AG04449 (cell line): ENCODE measurements at regions of chr11 and their contacts with region 1.

Region 1: GRCh38 chr11:2420502-2421225 is 20.1 kb downstream of the TSSC4 start:
- DNase-seq: no peak
- H3K4me3 ChIP-seq: no peak overlapping the region
- CTCF ChIP-seq: peak; percentile 94

Region 2: DNA sequence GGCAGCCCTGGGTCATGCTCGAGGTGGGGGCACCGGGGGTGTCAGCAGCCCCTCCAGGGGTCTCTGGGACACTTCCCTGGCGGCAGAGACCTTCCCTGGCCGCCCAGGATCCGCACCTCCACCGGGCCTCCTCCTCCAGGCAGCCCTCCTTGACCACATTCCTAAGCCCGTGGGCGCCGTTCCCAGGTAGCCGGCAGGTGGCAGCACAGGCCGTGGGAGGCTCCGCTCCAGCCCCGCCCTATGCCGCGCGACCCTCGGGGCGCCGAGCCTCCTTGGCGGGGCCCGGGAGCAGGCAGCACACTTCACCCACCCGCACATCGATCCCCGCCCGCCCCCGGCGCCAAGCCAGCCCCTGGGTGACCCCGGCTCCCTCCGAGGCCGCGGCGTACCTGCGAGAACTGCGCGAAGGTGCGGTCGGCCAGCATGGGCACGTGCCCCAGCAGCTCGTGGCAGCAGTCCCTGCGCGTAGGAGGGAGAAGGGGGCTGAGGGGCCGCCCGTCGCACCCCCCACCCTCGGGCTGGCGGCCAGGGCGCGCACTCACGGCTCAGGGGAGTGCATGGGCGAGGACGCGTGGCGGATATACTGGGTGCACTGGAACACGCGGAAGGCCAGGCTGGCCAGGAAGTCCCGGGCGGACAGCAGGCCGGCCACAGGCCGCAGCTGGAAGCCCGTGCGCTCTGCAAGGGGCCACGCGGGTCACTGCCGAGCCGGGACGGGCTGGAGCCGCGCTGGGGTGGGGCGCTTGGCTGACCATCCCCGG is 254.4 kb before region 1 on chr11:
- CTCF ChIA-PET with region 1: interaction called, 33 read pairs
- POLR2A ChIA-PET with region 1: no interaction called
- DNase-seq: no peak
- H3K4me3 ChIP-seq: no peak overlapping the region
- CTCF ChIP-seq: peak; percentile 59

Region 3: DNA sequence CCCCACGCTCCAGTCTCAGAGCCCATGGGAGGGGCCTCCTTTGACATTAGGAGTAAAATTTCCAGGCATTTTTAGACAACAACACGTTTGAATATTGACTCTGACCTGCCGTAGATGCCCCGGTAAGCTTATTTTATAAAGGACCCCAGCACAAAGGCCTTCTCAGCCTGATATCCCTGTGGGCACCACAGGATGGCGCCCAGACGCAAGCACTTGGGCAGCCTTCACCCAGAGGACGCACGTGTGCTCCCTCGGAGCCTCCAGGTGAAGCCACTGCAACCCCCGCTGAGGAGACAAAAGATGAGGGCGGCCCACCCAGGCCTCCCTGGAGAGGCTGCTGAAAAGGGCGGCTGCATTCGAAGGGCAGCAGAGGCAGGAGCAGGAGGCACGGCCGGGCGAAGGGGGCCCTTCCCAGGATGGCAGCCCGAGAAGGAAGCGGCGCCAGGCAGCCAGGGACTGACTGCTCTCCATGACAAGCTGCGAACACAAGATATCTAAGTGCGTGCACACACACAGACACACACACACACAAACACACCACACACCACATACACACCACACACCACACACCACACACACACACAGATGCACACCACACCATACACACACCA is 233.9 kb before region 1 on chr11:
- CTCF ChIA-PET with region 1: interaction called, 108 read pairs
- POLR2A ChIA-PET with region 1: no interaction called
- DNase-seq: no peak
- H3K4me3 ChIP-seq: no peak overlapping the region
- CTCF ChIP-seq: peak; percentile 52

Region 4: GRCh38 chr11:2269601-2270321 is 150.9 kb before region 1 on chr11:
- CTCF ChIA-PET with region 1: interaction called, 14 read pairs
- POLR2A ChIA-PET with region 1: no interaction called
- DNase-seq: no peak
- H3K4me3 ChIP-seq: no peak overlapping the region; the same call in 1 of the 2 replicates
- CTCF ChIP-seq: no peak

Region 5: GRCh38 chr11:2382936-2383851 is 37.5 kb before region 1 on chr11:
- CTCF ChIA-PET with region 1: interaction called, 19 read pairs
- POLR2A ChIA-PET with region 1: no interaction called
- DNase-seq: no peak
- H3K4me3 ChIP-seq: no peak overlapping the region; the same call in 1 of the 2 replicates
- CTCF ChIP-seq: no peak

Region 6: GRCh38 chr11:2440646-2441045 is 20.0 kb after region 1 on chr11:
- CTCF ChIA-PET with region 1: interaction called, 16 read pairs
- POLR2A ChIA-PET with region 1: no interaction called
- DNase-seq: no peak
- H3K4me3 ChIP-seq: no peak overlapping the region
- CTCF ChIP-seq: no peak

Region 7: DNA sequence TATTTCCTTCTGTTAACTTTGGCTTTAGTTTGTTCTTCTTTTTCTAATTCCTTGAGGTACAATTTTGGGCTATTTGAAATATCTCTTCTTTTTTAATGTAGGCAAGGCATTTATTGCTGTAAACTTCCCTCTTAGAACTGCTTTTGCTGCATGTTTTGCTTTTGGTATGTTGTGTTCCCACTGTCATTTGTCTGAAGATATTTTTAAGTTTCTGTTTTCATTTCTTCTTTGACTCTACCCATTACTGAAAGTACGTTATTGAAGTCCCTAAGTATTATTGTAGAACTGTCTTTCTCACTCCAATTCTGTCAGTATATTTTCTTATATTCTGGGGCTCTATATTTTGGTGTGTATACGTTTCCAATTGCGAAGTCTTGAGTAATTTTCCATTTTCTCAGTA is 201.2 kb after region 1 on chr11:
- CTCF ChIA-PET with region 1: no interaction called
- POLR2A ChIA-PET with region 1: no interaction called
- DNase-seq: no peak
- H3K4me3 ChIP-seq: no peak overlapping the region
- CTCF ChIP-seq: no peak